A549 (cell line): ENCODE measurements at regions of chr18 and their contacts with region 1.

Region 1: DNA sequence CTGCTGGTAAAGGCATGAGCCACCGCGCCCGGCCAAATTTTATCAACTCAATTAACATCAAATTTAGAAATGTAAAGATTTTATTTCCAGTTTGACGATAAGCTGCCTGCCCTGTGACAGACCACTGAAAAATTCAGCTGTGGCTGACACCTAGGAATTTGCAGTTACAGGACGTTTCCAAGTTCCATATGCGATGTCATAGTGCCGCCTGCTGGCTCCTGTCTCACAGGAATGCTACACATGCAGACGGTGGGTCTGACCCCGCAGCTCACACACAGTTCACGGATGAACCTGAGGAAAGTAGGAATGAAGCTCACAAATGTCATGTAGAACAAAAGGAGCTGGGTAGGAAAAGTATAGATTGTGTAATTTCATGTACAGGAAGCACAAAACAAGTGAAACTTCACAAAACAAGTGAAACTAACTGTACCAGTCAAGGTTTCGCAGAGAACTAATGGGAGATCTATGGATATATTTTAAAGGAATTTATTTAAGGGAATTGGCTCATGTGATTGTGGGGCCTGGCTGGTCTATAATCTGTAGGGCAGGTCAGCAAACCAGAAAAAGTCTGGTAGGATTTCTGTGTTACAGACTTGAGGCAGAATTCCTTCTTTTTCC is 13.2 kb upstream of the SEH1L start:
- DNase-seq: peak; percentile 67 to 77
- ATAC-seq: peak; percentile 95 to 98
- H3K4me3 ChIP-seq: no peak overlapping the region
- H3K27ac ChIP-seq: peak overlapping the region in 1 of 2 experiments; percentile 54; a peak in 2 of 6 replicates
- H3K4me1 ChIP-seq: 0 out of 3 replicates have a peak, but pooled peaks cover 4% of the 10 kb centered on the region
- CTCF ChIP-seq: peak; percentile 83
- EP300 ChIP-seq: no peak
- POLR2A ChIP-seq: no peak
- RAD21 ChIP-seq: peak; percentile 95 to 98

Region 2: DNA sequence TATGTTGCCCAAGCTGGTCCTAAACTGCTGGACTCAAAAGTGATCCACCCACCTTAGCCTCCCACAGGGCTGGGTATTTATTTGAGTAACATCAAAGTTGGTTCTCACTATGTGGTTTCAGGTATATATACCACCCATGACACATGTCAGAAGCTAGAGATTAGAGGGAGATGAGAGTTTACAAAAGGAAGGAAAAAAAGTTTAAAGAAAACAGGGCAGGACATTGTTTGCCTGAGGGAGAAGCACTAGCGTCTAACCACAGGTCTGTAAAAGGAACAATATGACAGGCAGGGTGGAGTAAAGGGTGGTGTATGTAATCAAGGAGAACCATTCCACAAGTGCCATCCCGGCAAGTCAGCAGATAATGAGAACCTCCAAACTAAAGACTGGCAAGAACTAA is 240.5 kb before region 1 on chr18:
- CTCF ChIA-PET with region 1: interaction called, 11 read pairs
- POLR2A ChIA-PET with region 1: no interaction called
- DNase-seq: no peak
- ATAC-seq: no peak
- H3K4me3 ChIP-seq: no peak overlapping the region
- H3K27ac ChIP-seq: no peak overlapping the region
- H3K4me1 ChIP-seq: peaks cover 8% of the 10 kb centered on the region; the same call in 2 of the 3 replicates
- CTCF ChIP-seq: no peak
- EP300 ChIP-seq: no peak
- POLR2A ChIP-seq: no peak
- RAD21 ChIP-seq: no peak

Region 3: DNA sequence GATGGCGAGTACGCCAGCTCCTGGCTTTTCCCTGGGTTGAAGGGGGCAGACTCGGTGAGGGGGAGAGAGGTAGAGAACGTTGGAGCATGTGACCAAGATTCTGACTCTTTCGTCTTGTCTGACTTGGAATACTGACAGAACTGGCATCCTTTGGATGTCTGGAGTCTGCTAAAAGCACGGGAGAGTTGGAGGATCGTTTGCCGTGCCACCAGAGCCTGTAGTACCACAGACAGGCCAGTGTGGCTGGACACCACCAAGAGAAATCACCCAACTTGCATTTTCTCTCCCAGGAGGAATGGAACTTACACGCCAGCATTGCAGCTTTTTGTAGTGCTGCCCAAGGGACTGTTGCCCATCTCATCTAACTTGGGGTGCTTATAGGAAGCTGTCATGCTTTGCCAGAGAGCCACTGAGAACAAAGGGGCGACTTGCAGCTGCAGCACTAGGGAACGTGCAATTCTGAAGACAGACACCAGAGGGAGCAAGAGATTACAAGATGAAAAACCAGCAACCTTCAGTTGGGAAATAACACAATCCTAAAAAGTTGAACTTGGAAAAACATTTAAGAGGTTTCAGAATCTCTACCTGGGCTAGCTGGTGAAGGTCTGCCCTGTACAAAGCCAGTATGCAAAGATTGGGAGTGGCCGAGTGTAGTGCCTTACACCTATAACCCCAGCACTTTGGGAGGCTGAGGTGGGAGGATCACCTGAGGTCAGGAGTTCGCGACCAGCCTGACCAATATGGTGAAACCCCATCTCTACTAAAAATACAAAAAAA is 207.6 kb before region 1 on chr18:
- CTCF ChIA-PET with region 1: interaction called, 159 read pairs
- POLR2A ChIA-PET with region 1: no interaction called
- DNase-seq: peak; percentile 50 to 73
- ATAC-seq: peak; percentile 87
- H3K4me3 ChIP-seq: no peak overlapping the region
- H3K27ac ChIP-seq: peak overlapping the region in 1 of 2 experiments; percentile 74; a peak in 3 of 6 replicates
- H3K4me1 ChIP-seq: no peaks in the 10 kb centered on the region
- CTCF ChIP-seq: peak; percentile 79
- EP300 ChIP-seq: no peak
- POLR2A ChIP-seq: no peak
- RAD21 ChIP-seq: peak; percentile 85 to 86

Region 4: GRCh38 chr18:12744103-12744502 is 190.5 kb before region 1 on chr18:
- CTCF ChIA-PET with region 1: interaction called, 83 read pairs
- POLR2A ChIA-PET with region 1: interaction called, 4 read pairs
- DNase-seq: peak; percentile 52 to 69
- ATAC-seq: peak; percentile 65 to 76; a peak in 4 of 6 replicates
- H3K4me3 ChIP-seq: no peak overlapping the region
- H3K27ac ChIP-seq: no peak overlapping the region
- H3K4me1 ChIP-seq: peaks cover 36% of the 10 kb centered on the region
- CTCF ChIP-seq: peak; percentile 62
- EP300 ChIP-seq: no peak
- POLR2A ChIP-seq: no peak
- RAD21 ChIP-seq: peak; percentile 70 to 81

Region 5: GRCh38 chr18:12890506-12890905 is 44.1 kb before region 1 on chr18:
- CTCF ChIA-PET with region 1: interaction called, 22 read pairs
- POLR2A ChIA-PET with region 1: no interaction called
- DNase-seq: peak in 1 of 2 experiments; percentile 22
- ATAC-seq: peak; percentile 83 to 85; a peak in 5 of 6 replicates
- H3K4me3 ChIP-seq: no peak overlapping the region
- H3K27ac ChIP-seq: no peak overlapping the region
- H3K4me1 ChIP-seq: 0 out of 3 replicates have a peak, but pooled peaks cover 3% of the 10 kb centered on the region
- CTCF ChIP-seq: no peak
- EP300 ChIP-seq: no peak
- POLR2A ChIP-seq: no peak
- RAD21 ChIP-seq: 0 out of 5 replicates have a peak, but pooled peaks of 1 of the 2 experiments have one; percentile 16

Region 6: GRCh38 chr18:12921178-12921577 is 13.4 kb before region 1 on chr18:
- CTCF ChIA-PET with region 1: interaction called, 39 read pairs
- POLR2A ChIA-PET with region 1: no interaction called
- DNase-seq: no peak
- ATAC-seq: no peak
- H3K4me3 ChIP-seq: no peak overlapping the region
- H3K27ac ChIP-seq: no peak overlapping the region
- H3K4me1 ChIP-seq: no peaks in the 10 kb centered on the region
- CTCF ChIP-seq: no peak
- EP300 ChIP-seq: no peak
- POLR2A ChIP-seq: no peak
- RAD21 ChIP-seq: no peak

Region 7: DNA sequence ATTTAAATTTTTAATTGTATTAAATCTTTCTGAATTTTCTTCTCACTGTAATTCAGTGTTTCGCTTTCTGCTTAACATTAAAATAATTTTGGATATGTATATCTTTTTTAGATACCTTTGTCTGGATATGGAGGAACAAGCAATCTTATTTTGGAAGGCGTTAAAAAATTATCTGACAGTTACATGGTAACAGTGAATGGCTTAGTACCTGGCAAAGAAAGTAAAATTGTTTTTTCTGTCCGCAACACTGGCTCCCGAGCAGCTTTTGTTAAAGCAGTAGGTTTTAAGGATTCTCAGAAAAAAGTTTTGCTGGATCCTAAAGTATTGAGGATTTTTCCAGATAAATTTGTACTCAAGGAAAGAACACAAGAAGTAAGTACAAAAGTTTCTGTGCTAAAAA is 152.3 kb after region 1 on chr18:
- CTCF ChIA-PET with region 1: no interaction called
- POLR2A ChIA-PET with region 1: no interaction called
- DNase-seq: no peak
- ATAC-seq: no peak
- H3K4me3 ChIP-seq: no peak overlapping the region
- H3K27ac ChIP-seq: no peak overlapping the region
- H3K4me1 ChIP-seq: no peaks in the 10 kb centered on the region
- CTCF ChIP-seq: no peak
- EP300 ChIP-seq: no peak
- POLR2A ChIP-seq: no peak
- RAD21 ChIP-seq: no peak